ENCODE measurements at regions of chr2 and their contacts with region 1.

Region 1: DNA sequence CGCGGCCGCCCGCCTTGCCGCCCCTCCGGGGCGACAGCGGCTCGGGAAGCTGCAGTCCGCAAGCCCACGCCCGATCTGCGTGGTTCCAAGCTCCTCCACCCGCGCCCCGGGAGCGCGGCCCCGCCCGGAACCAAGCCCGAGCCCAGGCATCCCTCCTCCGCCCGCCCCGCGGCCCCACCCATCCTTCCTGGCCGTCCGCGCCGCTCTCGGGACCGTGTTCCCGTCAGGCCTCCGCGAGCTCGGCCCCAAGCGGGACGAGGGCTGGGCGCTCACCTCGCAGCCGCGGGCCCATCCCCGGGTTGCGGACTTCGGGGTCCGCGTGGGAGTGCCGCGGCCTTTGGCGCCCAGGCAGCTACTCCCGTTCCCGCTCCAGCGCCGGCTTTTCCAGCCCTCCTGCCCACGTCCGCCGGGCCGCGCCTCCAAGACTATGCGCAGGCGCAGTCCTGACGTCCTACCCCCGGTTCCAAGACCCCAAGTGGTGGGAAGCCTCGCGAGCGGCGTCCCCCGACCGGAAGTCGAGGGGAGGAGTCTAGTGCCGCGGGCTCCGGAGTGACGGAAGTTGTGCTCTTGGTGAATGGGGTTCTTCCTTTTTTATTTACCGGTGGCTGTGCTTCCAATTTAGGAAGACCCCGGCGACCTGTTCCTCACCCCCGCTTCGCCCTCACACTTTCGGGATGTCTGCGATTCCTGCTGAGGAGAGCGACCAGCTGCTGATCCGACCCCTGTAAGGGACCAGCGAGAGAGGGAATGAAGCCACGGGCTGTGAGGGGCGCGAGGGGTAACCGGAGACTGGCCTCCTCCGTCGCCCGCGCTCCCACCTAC is at the starts of genes CPSF3 and ITGB1BP1:
- DNase-seq: peak; percentile 97
- H3K4me3 ChIP-seq: peak within 1 kb of the TSS; percentile 70 to 92 (median 90)
- H3K27ac ChIP-seq: peak within 1 kb of the TSS; percentile 74
- H3K4me1 ChIP-seq: peaks cover 16% of the 10 kb centered on the region
- H3K27me3 ChIP-seq: no peaks in the 10 kb centered on the region
- CTCF ChIP-seq: no peak
- total RNA-seq, gene CPSF3: 38.8 to 40.7 TPM
- total RNA-seq, gene ITGB1BP1: 20.3 to 155 TPM

Region 2: DNA sequence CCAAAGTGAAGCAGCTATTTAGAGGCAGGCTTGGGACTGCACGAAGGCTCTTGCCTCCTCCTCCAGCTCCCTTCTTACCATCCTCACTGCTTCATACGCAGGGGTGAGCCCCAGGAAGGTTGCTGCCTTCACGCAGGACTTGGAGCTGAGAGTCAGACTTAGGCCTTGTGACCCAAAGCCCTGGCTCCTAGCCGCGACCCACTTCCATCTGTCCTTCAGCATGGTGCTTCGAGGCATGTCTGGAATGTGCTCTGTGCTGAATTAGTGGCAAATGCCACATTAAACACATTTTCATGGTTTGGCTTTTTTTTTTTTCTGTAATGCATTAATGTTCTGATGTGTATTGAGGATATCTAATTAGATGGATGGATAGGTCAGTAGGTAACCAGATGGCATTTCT is 37.5 kb before region 1 on chr2:
- CTCF ChIA-PET with region 1: interaction called, 3 read pairs
- dilution Hi-C with region 1: no loop called
- in situ Hi-C with region 1: no loop called
- intact Hi-C with region 1: loop called (anchors 1 kb)
- DNase-seq: no peak
- H3K4me3 ChIP-seq: no peak overlapping the region
- H3K27ac ChIP-seq: peak overlapping the region; percentile 12
- H3K4me1 ChIP-seq: peaks cover 30% of the 10 kb centered on the region
- H3K27me3 ChIP-seq: no peaks in the 10 kb centered on the region
- CTCF ChIP-seq: no peak

Region 3: DNA sequence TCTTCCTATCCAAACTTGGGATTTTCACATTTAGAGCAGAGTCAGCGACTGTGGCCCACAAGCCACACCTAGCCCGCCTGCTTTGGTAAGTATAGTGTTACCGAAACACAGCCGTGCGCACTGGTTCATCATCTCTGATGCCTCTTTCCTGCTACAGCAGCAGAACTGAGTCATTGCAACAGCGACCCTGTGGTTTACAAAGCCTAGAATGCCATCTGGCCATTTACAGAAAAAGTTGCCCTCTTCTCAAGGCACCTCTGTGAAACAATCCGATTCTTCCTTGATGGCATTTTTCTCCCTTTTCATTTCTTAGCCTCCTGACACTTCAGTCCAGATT is 40.4 kb after region 1 on chr2:
- CTCF ChIA-PET with region 1: no interaction called
- dilution Hi-C with region 1: no loop called
- in situ Hi-C with region 1: no loop called
- intact Hi-C with region 1: no loop called
- DNase-seq: no peak
- H3K4me3 ChIP-seq: no peak overlapping the region
- H3K27ac ChIP-seq: no peak overlapping the region
- H3K4me1 ChIP-seq: no peaks in the 10 kb centered on the region
- H3K27me3 ChIP-seq: no peaks in the 10 kb centered on the region
- CTCF ChIP-seq: no peak

Region 4: DNA sequence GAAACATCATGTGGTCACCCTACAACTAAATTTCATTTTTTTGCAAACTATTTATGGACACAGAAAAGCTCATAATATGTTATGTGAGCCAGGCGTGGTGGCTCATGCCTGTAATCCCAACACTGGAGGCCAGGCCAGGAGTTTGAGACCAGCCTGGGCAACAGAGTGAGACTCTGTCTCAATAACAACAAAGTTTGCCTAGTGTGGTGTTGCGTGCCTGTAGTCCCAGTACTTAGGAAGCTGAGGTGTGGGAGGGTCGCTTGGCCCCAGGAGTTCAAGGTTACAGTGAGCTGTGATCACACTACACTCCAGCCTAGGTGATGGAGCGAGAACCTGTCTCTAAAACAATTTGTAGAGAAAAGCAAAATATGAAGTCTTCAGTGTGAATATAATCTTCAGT is 56.8 kb after region 1 on chr2:
- CTCF ChIA-PET with region 1: no interaction called
- dilution Hi-C with region 1: no loop called
- in situ Hi-C with region 1: no loop called
- intact Hi-C with region 1: no loop called
- DNase-seq: no peak
- H3K4me3 ChIP-seq: no peak overlapping the region
- H3K27ac ChIP-seq: no peak overlapping the region
- H3K4me1 ChIP-seq: peaks cover 1% of the 10 kb centered on the region
- H3K27me3 ChIP-seq: no peaks in the 10 kb centered on the region
- CTCF ChIP-seq: no peak

Region 5: GRCh38 chr2:9548506-9548905 is 125.2 kb after region 1 on chr2:
- CTCF ChIA-PET with region 1: no interaction called
- dilution Hi-C with region 1: no loop called
- in situ Hi-C with region 1: no loop called
- intact Hi-C with region 1: loop called (anchors 2 kb)
- DNase-seq: peak; percentile 32
- H3K4me3 ChIP-seq: no peak overlapping the region
- H3K27ac ChIP-seq: no peak overlapping the region
- H3K4me1 ChIP-seq: peaks cover 20% of the 10 kb centered on the region
- H3K27me3 ChIP-seq: no peaks in the 10 kb centered on the region
- CTCF ChIP-seq: no peak

Region 6: DNA sequence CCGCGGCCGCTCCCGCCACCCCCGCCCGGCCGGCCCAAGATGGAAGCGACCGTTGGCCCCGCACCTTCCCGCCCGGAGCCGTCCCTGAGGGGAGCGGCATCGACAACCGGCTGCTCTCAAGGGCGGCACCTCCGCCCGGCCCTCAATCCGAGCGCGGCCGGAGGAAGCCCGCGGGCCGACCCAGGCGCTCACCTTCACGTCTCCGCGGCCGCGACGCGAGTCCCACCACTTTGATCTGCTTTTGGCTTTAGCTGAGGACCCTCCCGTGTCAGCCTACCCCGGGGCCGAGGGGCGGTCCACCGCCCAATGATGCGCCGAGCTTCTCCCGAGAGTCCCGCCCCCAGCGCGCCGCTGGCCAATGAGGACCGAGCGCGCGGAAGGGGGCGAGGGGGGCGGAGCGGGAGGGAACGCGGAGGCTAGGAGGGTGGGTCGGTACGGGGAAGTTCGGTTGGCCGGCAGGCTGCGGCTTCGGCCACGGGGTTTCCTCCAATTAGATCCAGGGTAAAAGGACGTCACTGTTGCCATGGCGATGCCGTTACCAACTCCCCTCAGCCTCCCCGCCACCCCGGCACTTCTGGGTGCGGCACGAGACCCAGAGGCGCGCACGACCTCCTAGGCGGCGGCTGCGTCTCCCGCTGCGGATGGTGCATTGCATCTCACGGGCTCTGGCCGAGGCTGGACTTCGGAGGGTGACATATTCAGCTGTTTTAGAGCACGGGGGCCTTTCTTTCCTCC is 207.6 kb after region 1 on chr2 and contains the start of gene YWHAQ:
- CTCF ChIA-PET with region 1: no interaction called
- dilution Hi-C with region 1: no loop called
- in situ Hi-C with region 1: no loop called
- intact Hi-C with region 1: loop called (anchors 2 kb)
- DNase-seq: peak; percentile 99
- H3K4me3 ChIP-seq: peak within 1 kb of the TSS; percentile 88 to 89 (median 88)
- H3K27ac ChIP-seq: peak within 1 kb of the TSS; percentile 82
- H3K4me1 ChIP-seq: peaks cover 28% of the 10 kb centered on the region
- H3K27me3 ChIP-seq: no peaks in the 10 kb centered on the region
- CTCF ChIP-seq: no peak
- total RNA-seq, gene YWHAQ: 326 to 442 TPM